Dorsolateral prefrontal cortex (tissue), 120 donors: ENCODE measurements at regions of chr4 and their contacts with region 1.

Region 1: GRCh38 chr4:67988991-67989390 is 25.7 kb upstream of the TMPRSS11A start:
- DNase-seq: no peak
- H3K4me3 ChIP-seq: no peak overlapping the region
- H3K27ac ChIP-seq: no peak overlapping the region
- H3K27me3 ChIP-seq: no peaks in the 10 kb centered on the region
- CTCF ChIP-seq: no peak

Region 2: GRCh38 chr4:67899096-67899495 is 89.9 kb before region 1 on chr4:
- intact Hi-C with region 1: no loop called
- DNase-seq: no peak
- H3K4me3 ChIP-seq: no peak overlapping the region
- H3K27ac ChIP-seq: no peak overlapping the region
- H3K27me3 ChIP-seq: no peaks in the 10 kb centered on the region
- CTCF ChIP-seq: no peak

Region 3: DNA sequence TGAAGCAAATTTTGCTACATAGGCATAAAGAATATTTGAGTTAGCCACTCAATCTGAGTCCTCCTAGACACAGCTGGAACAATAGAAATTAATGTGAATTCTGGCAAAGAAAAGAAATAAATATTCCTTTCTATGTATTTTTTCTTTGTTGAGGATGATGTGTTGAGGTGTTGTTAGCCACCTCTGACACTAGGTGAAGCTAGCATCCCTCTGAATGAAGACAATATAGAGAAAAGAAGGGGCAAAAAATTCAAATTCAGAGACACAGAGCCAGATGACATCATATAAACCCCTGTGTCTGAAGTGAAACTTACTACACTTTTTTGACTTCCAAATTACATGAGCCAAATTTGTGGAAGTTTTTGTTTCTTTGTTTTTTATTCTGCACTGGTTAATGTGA is 70.6 kb before region 1 on chr4:
- intact Hi-C with region 1: no loop called
- DNase-seq: no peak
- H3K4me3 ChIP-seq: no peak overlapping the region
- H3K27ac ChIP-seq: no peak overlapping the region
- H3K27me3 ChIP-seq: no peaks in the 10 kb centered on the region
- CTCF ChIP-seq: peak in 2 of 56 donors; percentile 8 to 22

Region 4: GRCh38 chr4:68074388-68074787 is 85.4 kb after region 1 on chr4:
- intact Hi-C with region 1: loop called in 1 of 2 experiments (anchors 5 kb)
- DNase-seq: no peak
- H3K4me3 ChIP-seq: no peak overlapping the region
- H3K27ac ChIP-seq: no peak overlapping the region
- H3K27me3 ChIP-seq: peaks cover 0 to 4% (median 0%) of the 10 kb centered on the region in 45 donors
- CTCF ChIP-seq: no peak

Region 5: GRCh38 chr4:68175562-68176155 is 186.7 kb after region 1 on chr4:
- intact Hi-C with region 1: loop called (anchors 1 to 2 kb)
- DNase-seq: peak in 2 of 10 donors; percentile 47 to 54
- H3K4me3 ChIP-seq: no peak overlapping the region
- H3K27ac ChIP-seq: no peak overlapping the region
- H3K27me3 ChIP-seq: peaks cover 0 to 5% (median 0%) of the 10 kb centered on the region in 45 donors
- CTCF ChIP-seq: peak; percentile 59 to 92 (median 77)

Region 6: GRCh38 chr4:68855771-68856170 is 866.8 kb after region 1 on chr4:
- intact Hi-C with region 1: no loop called
- DNase-seq: no peak
- H3K4me3 ChIP-seq: no peak overlapping the region
- H3K27ac ChIP-seq: no peak overlapping the region
- H3K27me3 ChIP-seq: no peaks in the 10 kb centered on the region
- CTCF ChIP-seq: no peak